ENCODE measurements at regions of chrX and their contacts with region 1.

Region 1: DNA sequence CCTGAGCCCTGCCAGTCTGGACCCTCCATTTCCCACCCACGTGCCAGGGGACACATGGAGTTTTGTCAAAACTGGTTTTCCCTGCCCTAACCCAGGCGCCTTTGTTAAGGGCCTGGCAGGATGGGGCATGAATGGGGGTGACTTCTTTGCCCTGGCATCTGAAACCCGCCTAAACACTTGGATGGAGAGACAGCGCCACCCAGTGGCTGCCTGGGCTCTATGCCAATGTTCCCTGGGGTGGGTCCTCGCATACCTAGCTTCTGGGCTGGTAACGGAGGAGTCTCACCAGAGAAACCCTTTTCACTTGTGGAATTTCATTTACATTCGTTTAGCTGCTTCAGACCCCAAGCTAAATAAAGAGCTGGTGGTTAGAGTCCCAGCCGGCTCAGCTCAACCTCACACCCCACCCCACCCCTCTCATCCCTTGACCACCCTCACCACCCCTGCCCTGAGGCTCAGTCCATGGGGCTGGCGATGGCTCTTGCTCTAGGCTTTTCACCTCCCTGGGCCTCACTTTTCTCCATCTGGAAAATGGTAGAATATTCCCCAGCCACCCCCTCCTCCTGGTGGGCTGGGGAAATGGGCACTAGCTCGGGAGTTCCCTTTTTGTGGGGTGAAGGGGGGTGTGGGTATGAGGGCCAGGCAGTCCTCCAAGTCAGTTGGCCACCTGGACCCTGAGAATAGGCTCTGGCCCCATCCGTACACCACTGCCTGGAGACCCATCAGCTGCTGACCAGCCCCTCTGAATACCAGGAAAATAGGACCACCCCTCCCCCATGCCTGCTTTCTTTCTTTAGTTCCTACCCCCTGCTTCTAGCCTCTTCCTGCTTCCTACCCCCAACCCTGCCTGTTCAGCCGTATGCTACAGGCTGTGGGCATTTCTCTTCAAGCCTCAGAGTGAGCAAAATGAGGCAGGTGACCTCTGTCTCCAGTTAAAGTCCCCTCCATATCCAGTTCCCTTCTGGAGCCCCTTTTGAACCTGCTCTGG is 57.1 kb upstream of the PJA1 start:
- DNase-seq: peak; percentile 37 to 55 (median 40)
- H3K4me3 ChIP-seq: no peak overlapping the region
- H3K4me3 Mint-ChIP-seq: no peak overlapping the region
- H3K27ac ChIP-seq: no peak overlapping the region
- H3K27ac Mint-ChIP-seq: no peak overlapping the region
- H3K4me1 ChIP-seq: no peaks in the 10 kb centered on the region
- H3K4me1 Mint-ChIP-seq: no peaks in the 10 kb centered on the region
- H3K27me3 ChIP-seq: no peaks in the 10 kb centered on the region
- H3K27me3 Mint-ChIP-seq: peaks cover 2 to 15% (median 9%) of the 10 kb centered on the region in 3 donors
- CTCF ChIP-seq: peak; percentile 72

Region 2: GRCh38 chrX:68732906-68733493 is 489.4 kb before region 1 on chrX:
- intact Hi-C with region 1: loop called (anchors 5 to 10 kb)
- DNase-seq: peak; percentile 45 to 60 (median 53)
- H3K4me3 ChIP-seq: no peak overlapping the region
- H3K4me3 Mint-ChIP-seq: no peak overlapping the region
- H3K27ac ChIP-seq: no peak overlapping the region
- H3K27ac Mint-ChIP-seq: no peak overlapping the region
- H3K4me1 ChIP-seq: no peaks in the 10 kb centered on the region
- H3K4me1 Mint-ChIP-seq: no peaks in the 10 kb centered on the region
- H3K27me3 ChIP-seq: peaks cover 0 to 2% of the 10 kb centered on the region in 2 donors
- H3K27me3 Mint-ChIP-seq: peaks cover 0 to 16% (median 6%) of the 10 kb centered on the region in 3 donors
- CTCF ChIP-seq: peak; percentile 67

Region 3: DNA sequence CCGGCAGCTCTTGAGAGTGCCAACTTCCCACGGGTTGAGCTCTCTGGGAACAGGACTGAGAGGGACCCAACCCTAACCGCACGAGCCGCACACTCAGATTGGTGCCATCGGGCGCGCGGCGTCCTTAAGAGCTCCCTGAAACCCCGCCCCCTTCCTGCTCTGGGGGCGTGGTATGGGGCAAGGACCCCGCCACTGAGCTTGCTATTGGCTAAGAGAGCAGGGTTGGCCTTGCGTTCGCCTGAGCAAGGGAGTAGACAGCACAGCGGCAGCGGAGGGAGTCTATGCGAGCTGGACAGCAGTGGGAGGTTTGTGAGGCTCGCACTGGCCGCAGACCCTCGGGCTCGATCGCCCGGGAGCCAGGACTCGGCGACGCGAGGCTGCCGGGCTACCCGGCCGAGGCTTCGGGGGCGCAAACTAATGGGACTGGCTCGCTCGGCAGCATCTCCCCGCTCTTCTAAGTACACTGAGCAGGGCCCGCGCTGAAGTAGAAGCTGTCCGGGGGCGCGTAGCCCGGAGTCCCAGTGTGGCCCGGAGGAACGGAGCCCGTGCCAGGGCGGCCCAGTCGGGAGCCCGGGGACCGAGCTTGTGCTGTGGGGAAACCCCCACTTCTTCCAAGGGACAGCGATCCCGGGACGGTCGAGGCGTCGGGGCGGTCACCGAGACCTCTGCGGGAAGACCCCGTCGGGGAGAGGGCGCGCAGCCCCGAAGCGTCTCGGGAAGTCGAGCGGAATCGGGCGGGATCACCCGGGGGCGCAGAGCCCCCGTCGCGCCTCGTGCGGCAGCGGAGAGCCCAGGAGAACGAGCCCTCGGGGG is 393.5 kb before region 1 on chrX and contains the start of gene EFNB1:
- intact Hi-C with region 1: loop called (anchors 2 to 5 kb)
- DNase-seq: peak; percentile 89 to 90 (median 89)
- H3K4me3 ChIP-seq: peak within 1 kb of the TSS; percentile 57 to 84 (median 81)
- H3K4me3 Mint-ChIP-seq: peak within 1 kb of the TSS; percentile 84 to 94
- H3K27ac ChIP-seq: peak within 1 kb of the TSS in 1 of 2 donors; percentile 20
- H3K27ac Mint-ChIP-seq: peak within 1 kb of the TSS in 6 of 7 donors; percentile 2 to 84 (median 70)
- H3K4me1 ChIP-seq: peaks cover 23 to 47% of the 10 kb centered on the region in 2 donors
- H3K4me1 Mint-ChIP-seq: peaks cover 37% of the 10 kb centered on the region
- H3K27me3 ChIP-seq: peaks cover 0 to 23% of the 10 kb centered on the region in 2 donors
- H3K27me3 Mint-ChIP-seq: peaks cover 21 to 35% (median 27%) of the 10 kb centered on the region in 3 donors
- CTCF ChIP-seq: no peak
- polyA plus RNA-seq, gene EFNB1: 4.7 to 6.6 (median 5.4) TPM

Region 4: DNA sequence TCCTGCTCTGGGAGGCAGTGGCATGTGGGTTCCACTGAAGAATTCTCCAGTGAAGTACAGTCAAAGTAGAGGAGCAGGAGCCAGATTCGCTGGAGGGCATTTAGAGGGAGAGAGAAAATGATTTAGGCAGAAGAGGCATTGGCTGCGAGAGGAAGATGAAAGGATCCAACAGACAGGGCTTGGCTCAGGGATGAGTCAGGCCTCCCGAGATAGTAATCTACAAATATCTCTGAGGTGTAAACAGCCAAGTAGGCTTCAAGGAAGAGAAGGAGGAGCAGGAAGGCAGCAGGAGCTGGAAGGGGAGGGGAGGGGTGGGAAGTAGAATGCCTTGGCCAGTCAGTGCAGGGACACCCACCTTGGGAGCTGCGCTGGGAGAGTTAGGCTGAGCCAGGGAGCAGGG is 112.7 kb before region 1 on chrX:
- intact Hi-C with region 1: no loop called
- DNase-seq: no peak
- H3K4me3 ChIP-seq: no peak overlapping the region
- H3K4me3 Mint-ChIP-seq: no peak overlapping the region
- H3K27ac ChIP-seq: no peak overlapping the region
- H3K27ac Mint-ChIP-seq: peak overlapping the region in 1 of 7 donors; percentile 37
- H3K4me1 ChIP-seq: no peaks in the 10 kb centered on the region
- H3K4me1 Mint-ChIP-seq: no peaks in the 10 kb centered on the region
- H3K27me3 ChIP-seq: no peaks in the 10 kb centered on the region
- H3K27me3 Mint-ChIP-seq: peaks cover 0 to 6% (median 4%) of the 10 kb centered on the region in 3 donors
- CTCF ChIP-seq: no peak

Region 5: DNA sequence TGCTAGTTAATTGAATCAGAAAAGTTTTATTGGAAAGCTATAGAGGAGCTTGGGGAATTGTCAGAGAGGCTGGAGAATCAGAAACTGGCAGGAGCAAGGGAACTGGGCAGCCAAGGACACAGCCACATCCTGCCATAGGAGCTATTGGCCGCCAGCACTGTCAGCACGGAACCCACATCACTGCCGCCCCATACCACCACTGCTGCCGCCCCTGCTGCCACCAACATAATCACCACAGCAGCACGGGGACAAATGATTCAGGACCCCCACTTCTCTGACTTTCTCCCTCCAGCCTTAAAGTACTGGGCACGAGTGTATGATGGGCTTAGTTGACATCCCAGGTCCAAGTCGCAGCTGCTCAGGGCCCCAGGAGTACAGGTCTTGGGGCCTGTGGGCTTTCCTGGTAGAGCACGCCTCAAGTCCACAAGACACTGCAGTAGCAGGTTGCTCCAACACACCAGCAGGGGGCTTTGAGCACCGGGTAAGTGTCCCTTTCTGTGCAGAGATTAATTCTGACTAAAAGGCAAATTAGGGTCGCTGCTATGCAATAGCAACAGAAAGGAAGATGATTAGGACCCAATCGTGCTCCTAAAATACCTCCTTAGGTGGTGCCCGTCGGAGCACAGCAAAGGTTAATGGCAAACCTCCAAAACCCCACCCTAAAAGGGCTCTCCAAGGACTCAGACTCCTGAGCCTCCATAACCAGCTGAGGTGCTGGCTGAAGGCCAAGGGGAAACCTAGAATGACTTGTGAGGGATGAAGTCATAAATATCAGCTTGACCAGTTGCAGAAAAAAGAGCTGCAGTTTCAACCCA is 64.0 kb before region 1 on chrX:
- intact Hi-C with region 1: no loop called
- DNase-seq: no peak
- H3K4me3 ChIP-seq: no peak overlapping the region
- H3K4me3 Mint-ChIP-seq: no peak overlapping the region
- H3K27ac ChIP-seq: no peak overlapping the region
- H3K27ac Mint-ChIP-seq: no peak overlapping the region
- H3K4me1 ChIP-seq: no peaks in the 10 kb centered on the region
- H3K4me1 Mint-ChIP-seq: no peaks in the 10 kb centered on the region
- H3K27me3 ChIP-seq: no peaks in the 10 kb centered on the region
- H3K27me3 Mint-ChIP-seq: peaks cover 0 to 14% (median 5%) of the 10 kb centered on the region in 3 donors
- CTCF ChIP-seq: peak; percentile 20

Region 6: GRCh38 chrX:69238114-69238886 is 15.9 kb after region 1 on chrX:
- intact Hi-C with region 1: no loop called
- DNase-seq: no peak
- H3K4me3 ChIP-seq: no peak overlapping the region
- H3K4me3 Mint-ChIP-seq: no peak overlapping the region
- H3K27ac ChIP-seq: no peak overlapping the region
- H3K27ac Mint-ChIP-seq: no peak overlapping the region
- H3K4me1 ChIP-seq: no peaks in the 10 kb centered on the region
- H3K4me1 Mint-ChIP-seq: no peaks in the 10 kb centered on the region
- H3K27me3 ChIP-seq: no peaks in the 10 kb centered on the region
- H3K27me3 Mint-ChIP-seq: peaks cover 0 to 14% (median 1%) of the 10 kb centered on the region in 3 donors
- CTCF ChIP-seq: no peak

Region 7: GRCh38 chrX:69741721-69742120 is 519.3 kb after region 1 on chrX:
- intact Hi-C with region 1: no loop called
- DNase-seq: no peak
- H3K4me3 ChIP-seq: no peak overlapping the region
- H3K4me3 Mint-ChIP-seq: no peak overlapping the region
- H3K27ac ChIP-seq: no peak overlapping the region
- H3K27ac Mint-ChIP-seq: no peak overlapping the region
- H3K4me1 ChIP-seq: no peaks in the 10 kb centered on the region
- H3K4me1 Mint-ChIP-seq: no peaks in the 10 kb centered on the region
- H3K27me3 ChIP-seq: no peaks in the 10 kb centered on the region
- H3K27me3 Mint-ChIP-seq: peaks cover 0 to 4% (median 2%) of the 10 kb centered on the region in 3 donors
- CTCF ChIP-seq: no peak

Measured in CD14-positive monocyte (primary cell).